T-cell (primary cell): ENCODE measurements at regions of chrX and their contacts with region 1.

Region 1: GRCh38 chrX:49111791-49112190 is 11.7 kb downstream of the GPKOW start:
- DNase-seq: no peak
- ATAC-seq: no peak
- H3K4me3 ChIP-seq: no peak overlapping the region
- H3K4me3 Mint-ChIP-seq: no peak overlapping the region
- H3K27ac ChIP-seq: no peak overlapping the region
- H3K27ac Mint-ChIP-seq: no peak overlapping the region
- H3K4me1 ChIP-seq: peaks cover 0 to 8% of the 10 kb centered on the region in 2 experiments
- H3K4me1 Mint-ChIP-seq: peaks cover 7 to 14% (median 13%) of the 10 kb centered on the region in 3 donors
- H3K27me3 ChIP-seq: no peaks in the 10 kb centered on the region
- H3K27me3 Mint-ChIP-seq: peaks cover 0 to 5% of the 10 kb centered on the region in 2 donors

Region 2: GRCh38 chrX:49073601-49074571 is 37.9 kb before region 1 on chrX and contains the start of gene PRAF2:
- CTCF ChIA-PET with region 1: interaction called in 1 of 2 experiments, 3 read pairs
- POLR2A ChIA-PET with region 1: interaction called in 1 of 2 experiments, 10 read pairs
- DNase-seq: peak; percentile 79 to 92 (median 85)
- ATAC-seq: peak; percentile 95 to 97 (median 96)
- H3K4me3 ChIP-seq: peak within 1 kb of the TSS; percentile 45 to 69
- H3K4me3 Mint-ChIP-seq: peak within 1 kb of the TSS; percentile 80 to 85 (median 83)
- H3K27ac ChIP-seq: peak within 1 kb of the TSS; percentile 76
- H3K27ac Mint-ChIP-seq: peak within 1 kb of the TSS; percentile 77 to 87
- H3K4me1 ChIP-seq: peaks cover 0 to 27% of the 10 kb centered on the region in 2 experiments
- H3K4me1 Mint-ChIP-seq: peaks cover 21 to 31% (median 22%) of the 10 kb centered on the region in 3 donors
- H3K27me3 ChIP-seq: no peaks in the 10 kb centered on the region
- H3K27me3 Mint-ChIP-seq: no peaks in the 10 kb centered on the region
- total RNA-seq, gene PRAF2: 17.5 to 34.5 (median 34.0) TPM